CD8-positive, alpha-beta T cell (primary cell): ENCODE measurements at regions of chr17 and their contacts with region 1.

Region 1: DNA sequence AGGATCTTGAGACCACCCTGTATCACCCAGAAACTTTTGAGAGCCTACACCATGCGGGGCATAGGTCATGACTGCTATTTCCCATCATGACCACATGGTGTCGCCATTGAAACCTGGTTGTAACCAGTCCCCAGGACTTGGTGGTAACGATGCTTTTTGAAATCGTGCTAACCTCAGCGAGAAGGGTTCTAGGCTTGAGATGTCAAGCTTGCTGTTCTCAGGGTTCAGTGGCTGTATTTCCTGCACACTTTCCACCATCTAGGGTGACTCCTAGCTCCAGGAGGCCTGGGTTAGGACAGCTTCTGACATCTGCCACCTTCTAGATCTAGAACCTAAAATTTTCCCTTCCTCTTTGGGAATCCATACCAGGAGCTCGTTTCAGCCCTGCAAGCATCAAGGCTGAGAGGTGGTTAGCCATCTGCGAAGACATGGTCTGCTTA is 13.0 kb upstream of the SPNS3 start:
- DNase-seq: peak in 8 of 9 experiments; percentile 40 to 86 (median 59)
- ATAC-seq: peak; percentile 99
- H3K4me3 ChIP-seq: no peak overlapping the region
- H3K4me3 Mint-ChIP-seq: no peak overlapping the region
- H3K27ac ChIP-seq: no peak overlapping the region
- H3K27ac Mint-ChIP-seq: no peak overlapping the region
- H3K4me1 ChIP-seq: peaks cover 4% of the 10 kb centered on the region
- H3K4me1 Mint-ChIP-seq: peaks cover 3% of the 10 kb centered on the region
- H3K27me3 ChIP-seq: no peaks in the 10 kb centered on the region
- H3K27me3 Mint-ChIP-seq: no peaks in the 10 kb centered on the region
- CTCF ChIP-seq: peak; percentile 85

Region 2: GRCh38 chr17:4199818-4200402 is 220.8 kb before region 1 on chr17:
- CTCF ChIA-PET with region 1: interaction called, 28 read pairs
- POLR2A ChIA-PET with region 1: no interaction called
- intact Hi-C with region 1: no loop called
- DNase-seq: peak in 6 of 9 experiments; percentile 6 to 67 (median 41)
- ATAC-seq: peak; percentile 80
- H3K4me3 ChIP-seq: no peak overlapping the region
- H3K4me3 Mint-ChIP-seq: no peak overlapping the region
- H3K27ac ChIP-seq: no peak overlapping the region
- H3K27ac Mint-ChIP-seq: no peak overlapping the region
- H3K4me1 ChIP-seq: no peaks in the 10 kb centered on the region
- H3K4me1 Mint-ChIP-seq: no peaks in the 10 kb centered on the region
- H3K27me3 ChIP-seq: no peaks in the 10 kb centered on the region
- H3K27me3 Mint-ChIP-seq: no peaks in the 10 kb centered on the region
- CTCF ChIP-seq: peak; percentile 84

Region 3: DNA sequence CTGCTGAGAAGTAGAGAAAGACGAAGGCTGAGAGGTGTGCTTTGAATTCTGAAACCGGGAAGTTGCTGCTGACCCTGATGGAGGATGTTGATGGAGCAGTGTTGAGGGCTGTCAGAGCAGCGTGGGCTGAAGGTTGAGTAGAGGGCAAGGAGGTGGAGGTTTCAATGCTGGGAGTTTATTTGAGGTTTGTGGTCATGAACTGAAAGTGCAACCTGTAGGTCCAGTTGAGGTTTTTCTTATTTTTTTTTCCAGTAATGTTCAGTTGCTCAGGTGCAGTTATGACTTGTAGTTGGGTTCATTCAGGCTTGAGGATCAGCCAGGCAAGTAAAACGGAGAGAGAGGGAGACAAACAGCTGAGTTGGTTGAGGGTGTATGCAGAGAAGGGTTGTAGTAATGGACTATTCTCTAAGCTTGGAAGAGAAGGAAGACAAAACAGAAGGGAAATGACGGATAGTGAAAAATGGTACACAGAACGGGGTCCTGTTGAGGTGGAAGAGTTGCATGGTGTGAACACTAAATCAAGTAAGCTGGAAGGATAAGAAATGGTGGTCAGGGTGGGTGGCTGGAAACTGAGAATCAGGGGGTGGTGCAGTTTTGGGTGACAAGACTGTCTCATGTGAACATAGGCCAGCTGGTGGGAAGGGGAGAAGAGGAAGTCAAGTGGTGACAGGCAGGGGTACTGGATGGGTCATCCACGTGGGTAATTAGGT is 45.5 kb before region 1 on chr17:
- CTCF ChIA-PET with region 1: no interaction called
- POLR2A ChIA-PET with region 1: no interaction called
- intact Hi-C with region 1: no loop called
- DNase-seq: peak in 4 of 9 experiments; percentile 3 to 77 (median 36)
- ATAC-seq: peak; percentile 71
- H3K4me3 ChIP-seq: no peak overlapping the region
- H3K4me3 Mint-ChIP-seq: peak overlapping the region; percentile 54
- H3K27ac ChIP-seq: peak overlapping the region in 1 of 2 experiments; percentile 47
- H3K27ac Mint-ChIP-seq: peak overlapping the region; percentile 77
- H3K4me1 ChIP-seq: peaks cover 9% of the 10 kb centered on the region
- H3K4me1 Mint-ChIP-seq: peaks cover 18% of the 10 kb centered on the region
- H3K27me3 ChIP-seq: no peaks in the 10 kb centered on the region
- H3K27me3 Mint-ChIP-seq: no peaks in the 10 kb centered on the region
- CTCF ChIP-seq: no peak

Region 4: DNA sequence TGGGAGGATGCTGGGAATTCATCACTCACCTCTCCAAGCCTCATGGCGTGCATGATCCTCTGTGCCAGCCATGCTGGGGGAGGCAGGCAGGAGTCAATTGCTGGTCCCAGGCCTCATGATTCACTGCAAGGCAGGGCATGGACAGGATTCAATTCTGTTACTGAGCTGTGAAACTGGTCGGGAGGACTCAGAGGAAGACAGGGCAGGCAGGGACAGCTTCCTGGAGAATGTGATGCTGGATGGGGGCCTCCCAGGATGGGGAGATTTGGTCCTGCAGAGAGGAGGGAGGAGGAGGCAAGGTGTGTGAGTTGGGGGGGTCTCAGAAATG is 27.9 kb after region 1 on chr17:
- CTCF ChIA-PET with region 1: interaction called, 11 read pairs
- POLR2A ChIA-PET with region 1: no interaction called
- intact Hi-C with region 1: no loop called
- DNase-seq: no peak
- ATAC-seq: no peak
- H3K4me3 ChIP-seq: no peak overlapping the region
- H3K4me3 Mint-ChIP-seq: no peak overlapping the region
- H3K27ac ChIP-seq: no peak overlapping the region
- H3K27ac Mint-ChIP-seq: no peak overlapping the region
- H3K4me1 ChIP-seq: no peaks in the 10 kb centered on the region
- H3K4me1 Mint-ChIP-seq: no peaks in the 10 kb centered on the region
- H3K27me3 ChIP-seq: no peaks in the 10 kb centered on the region
- H3K27me3 Mint-ChIP-seq: no peaks in the 10 kb centered on the region
- CTCF ChIP-seq: no peak

Region 5: GRCh38 chr17:4498461-4499397 is 78.0 kb after region 1 on chr17 and contains the start of gene SPNS2:
- CTCF ChIA-PET with region 1: interaction called, 19 read pairs
- POLR2A ChIA-PET with region 1: no interaction called
- intact Hi-C with region 1: no loop called
- DNase-seq: peak; percentile 28 to 84 (median 61)
- ATAC-seq: peak; percentile 91
- H3K4me3 ChIP-seq: peak within 1 kb of the TSS; percentile 41 to 52
- H3K4me3 Mint-ChIP-seq: peak within 1 kb of the TSS; percentile 85
- H3K27ac ChIP-seq: no peak within 1 kb of the TSS
- H3K27ac Mint-ChIP-seq: no peak within 1 kb of the TSS
- H3K4me1 ChIP-seq: peaks cover 32% of the 10 kb centered on the region
- H3K4me1 Mint-ChIP-seq: peaks cover 29% of the 10 kb centered on the region
- H3K27me3 ChIP-seq: peaks cover 0 to 6% of the 10 kb centered on the region in 2 experiments
- H3K27me3 Mint-ChIP-seq: peaks cover 16% of the 10 kb centered on the region
- CTCF ChIP-seq: no peak
- total RNA-seq, gene SPNS2: 0.64 to 1.1 TPM

Region 6: GRCh38 chr17:4531988-4532736 is 111.5 kb after region 1 on chr17:
- CTCF ChIA-PET with region 1: no interaction called
- POLR2A ChIA-PET with region 1: no interaction called
- intact Hi-C with region 1: no loop called
- DNase-seq: peak in 1 of 9 experiments; percentile 2
- ATAC-seq: no peak
- H3K4me3 ChIP-seq: no peak overlapping the region
- H3K4me3 Mint-ChIP-seq: no peak overlapping the region
- H3K27ac ChIP-seq: no peak overlapping the region
- H3K27ac Mint-ChIP-seq: no peak overlapping the region
- H3K4me1 ChIP-seq: peaks cover 3% of the 10 kb centered on the region
- H3K4me1 Mint-ChIP-seq: peaks cover 6% of the 10 kb centered on the region
- H3K27me3 ChIP-seq: no peaks in the 10 kb centered on the region
- H3K27me3 Mint-ChIP-seq: peaks cover 3% of the 10 kb centered on the region
- CTCF ChIP-seq: no peak

Region 7: DNA sequence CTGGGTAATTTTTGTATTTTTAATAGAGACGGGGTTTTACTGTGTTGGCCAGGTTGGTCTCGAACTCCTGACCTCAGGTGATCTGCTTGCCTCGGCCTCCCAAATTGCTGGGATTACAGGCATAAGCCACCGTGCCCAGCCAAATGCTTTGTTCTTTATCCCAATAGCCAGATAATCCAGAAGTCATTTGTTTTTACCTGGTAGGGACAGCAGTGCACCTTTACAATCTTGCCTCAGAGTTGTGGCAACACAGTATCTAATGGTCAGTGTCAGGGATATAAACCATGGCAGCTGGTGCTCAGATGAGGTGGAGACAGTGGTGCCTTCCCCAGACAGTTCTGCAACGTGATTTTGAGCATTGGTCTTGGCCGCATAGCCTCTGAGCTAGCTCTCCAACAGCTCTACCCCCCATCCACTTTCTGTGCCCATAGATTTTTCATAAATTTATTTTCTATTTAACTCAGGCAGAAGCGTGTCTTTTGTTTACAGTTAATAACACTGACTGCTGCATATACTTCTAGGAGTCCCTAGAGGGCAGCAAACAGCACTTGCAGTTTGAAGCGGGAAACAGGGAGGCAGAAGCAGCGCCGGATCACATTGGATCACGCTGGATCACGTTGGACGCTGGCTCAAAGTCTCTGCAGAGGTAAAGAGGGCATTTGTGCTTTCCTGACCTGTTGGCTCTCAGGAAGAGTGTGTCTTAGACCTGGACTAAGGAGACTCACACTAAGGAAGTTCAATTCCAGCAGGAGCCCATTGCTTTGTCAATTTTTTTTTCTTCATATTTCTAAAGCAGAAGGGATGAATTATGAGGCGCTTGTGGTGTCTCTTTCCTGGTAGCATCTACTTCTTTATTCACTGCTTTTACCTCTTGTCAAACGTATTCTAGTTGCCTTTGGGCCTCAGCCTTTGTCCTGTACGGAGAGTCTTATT is 144.8 kb after region 1 on chr17:
- CTCF ChIA-PET with region 1: interaction called, 10 read pairs
- POLR2A ChIA-PET with region 1: no interaction called
- intact Hi-C with region 1: loop called in 1 of 2 experiments (anchors 1 kb)
- DNase-seq: peak in 8 of 9 experiments; percentile 20 to 79 (median 50)
- ATAC-seq: peak; percentile 88
- H3K4me3 ChIP-seq: no peak overlapping the region
- H3K4me3 Mint-ChIP-seq: peak overlapping the region; percentile 59
- H3K27ac ChIP-seq: no peak overlapping the region
- H3K27ac Mint-ChIP-seq: no peak overlapping the region
- H3K4me1 ChIP-seq: peaks cover 3% of the 10 kb centered on the region
- H3K4me1 Mint-ChIP-seq: peaks cover 24% of the 10 kb centered on the region
- H3K27me3 ChIP-seq: no peaks in the 10 kb centered on the region
- H3K27me3 Mint-ChIP-seq: no peaks in the 10 kb centered on the region
- CTCF ChIP-seq: peak; percentile 77